Left lung (tissue), 14 donors: ENCODE measurements at regions of chr5 and their contacts with region 1.

Region 1: GRCh38 chr5:14108170-14108996 is 34.8 kb upstream of the TRIO start:
- DNase-seq: peak in 3 of 4 donors; percentile 46 to 67 (median 48)
- ATAC-seq: peak; percentile 96
- H3K4me3 ChIP-seq: no peak overlapping the region
- H3K27ac ChIP-seq: peak overlapping the region in 1 of 2 donors; percentile 2
- H3K4me1 ChIP-seq: peaks cover 0 to 29% of the 10 kb centered on the region in 2 donors
- H3K27me3 ChIP-seq: no peaks in the 10 kb centered on the region
- CTCF ChIP-seq: peak; percentile 63 to 78

Region 2: DNA sequence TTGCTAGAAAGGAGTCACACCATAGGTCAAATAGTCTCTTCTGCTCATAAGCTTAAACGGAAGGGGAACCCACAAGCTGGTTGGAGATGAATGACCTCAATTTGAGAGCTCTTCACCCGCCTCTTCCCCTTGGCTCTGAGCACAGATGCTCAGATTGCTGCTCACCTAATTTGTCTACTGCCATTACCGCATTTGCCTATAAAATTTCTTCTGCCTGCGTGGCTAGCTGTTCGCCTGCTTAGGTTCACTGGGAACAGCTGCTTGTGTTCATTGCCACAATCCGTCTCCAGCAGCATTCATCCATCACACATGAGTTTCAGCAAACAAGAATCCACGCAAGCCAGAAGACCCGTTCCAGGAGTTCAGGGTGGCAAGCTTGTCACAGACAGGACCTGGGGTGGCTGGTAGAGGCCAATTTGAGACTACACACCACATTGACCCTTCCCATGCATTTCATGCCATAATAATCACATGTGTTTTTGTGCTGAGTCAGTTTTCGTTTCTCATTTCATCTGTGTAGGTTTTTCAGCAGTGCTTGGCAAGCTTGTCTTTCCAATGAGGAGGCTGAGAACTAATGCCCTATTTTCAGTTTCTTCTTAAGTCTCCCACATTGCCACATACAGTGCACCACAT is 113.6 kb before region 1 on chr5:
- intact Hi-C with region 1: loop called in 1 of 2 experiments (anchors 10 kb)
- DNase-seq: peak in 2 of 4 donors; percentile 36 to 51
- ATAC-seq: peak; percentile 26
- H3K4me3 ChIP-seq: no peak overlapping the region
- H3K27ac ChIP-seq: no peak overlapping the region
- H3K4me1 ChIP-seq: no peaks in the 10 kb centered on the region
- H3K27me3 ChIP-seq: no peaks in the 10 kb centered on the region
- CTCF ChIP-seq: no peak